ENCODE measurements at regions of chr6 and their contacts with region 1.

Region 1: GRCh38 chr6:169789982-169790927 is 38.8 kb downstream of the ERMARD start:
- DNase-seq: peak; percentile 68
- H3K4me3 Mint-ChIP-seq: peak overlapping the region; percentile 70
- H3K27ac Mint-ChIP-seq: no peak overlapping the region
- H3K4me1 Mint-ChIP-seq: peaks cover 5% of the 10 kb centered on the region
- H3K27me3 Mint-ChIP-seq: peaks cover 14% of the 10 kb centered on the region
- CTCF ChIP-seq: peak; percentile 90

Region 2: DNA sequence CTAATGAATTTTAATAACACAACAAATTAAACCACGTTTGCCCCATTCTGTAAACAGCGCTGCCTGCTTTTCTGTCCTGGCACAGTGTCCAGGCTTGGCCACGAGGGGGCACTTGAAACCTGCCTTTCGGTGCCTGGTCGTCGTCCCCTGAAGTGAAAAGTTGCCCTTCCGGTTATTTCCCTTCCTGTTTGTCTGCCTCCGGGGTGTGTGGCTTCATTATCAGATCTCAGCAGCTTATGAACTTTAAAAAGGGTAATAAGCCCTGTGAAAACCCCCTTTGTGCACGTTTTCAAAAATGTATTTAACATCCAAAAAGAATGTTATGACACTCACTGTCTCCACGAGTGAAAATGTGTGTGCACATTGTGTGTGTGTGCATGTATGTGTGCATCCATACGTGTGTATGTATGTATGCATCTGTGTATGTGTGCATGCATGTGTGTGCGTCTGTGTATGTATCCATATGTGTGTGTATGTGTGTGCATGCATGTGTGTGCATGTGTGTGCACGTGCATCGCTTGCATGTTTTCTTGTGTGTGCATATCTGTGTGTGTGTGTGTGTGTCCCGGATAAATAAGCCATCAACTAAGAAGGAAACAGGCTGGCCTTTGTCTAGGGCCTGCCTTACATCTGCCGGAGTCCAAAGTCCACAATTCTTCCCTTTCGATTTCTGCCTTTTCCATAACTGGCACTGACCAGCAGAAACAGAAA is 895.0 kb before region 1 on chr6:
- CTCF ChIA-PET with region 1: interaction called, 4 read pairs
- POLR2A ChIA-PET with region 1: no interaction called
- intact Hi-C with region 1: loop called (anchors 10 kb)
- DNase-seq: peak; percentile 75
- H3K4me3 Mint-ChIP-seq: peak overlapping the region; percentile 35
- H3K27ac Mint-ChIP-seq: no peak overlapping the region
- H3K4me1 Mint-ChIP-seq: no peaks in the 10 kb centered on the region
- H3K27me3 Mint-ChIP-seq: peaks cover 35% of the 10 kb centered on the region
- CTCF ChIP-seq: peak; percentile 93

Region 3: GRCh38 chr6:169479783-169480495 is 310.3 kb before region 1 on chr6:
- CTCF ChIA-PET with region 1: no interaction called
- POLR2A ChIA-PET with region 1: no interaction called
- intact Hi-C with region 1: no loop called
- DNase-seq: no peak
- H3K4me3 Mint-ChIP-seq: no peak overlapping the region
- H3K27ac Mint-ChIP-seq: no peak overlapping the region
- H3K4me1 Mint-ChIP-seq: no peaks in the 10 kb centered on the region
- H3K27me3 Mint-ChIP-seq: no peaks in the 10 kb centered on the region
- CTCF ChIP-seq: no peak

Region 4: DNA sequence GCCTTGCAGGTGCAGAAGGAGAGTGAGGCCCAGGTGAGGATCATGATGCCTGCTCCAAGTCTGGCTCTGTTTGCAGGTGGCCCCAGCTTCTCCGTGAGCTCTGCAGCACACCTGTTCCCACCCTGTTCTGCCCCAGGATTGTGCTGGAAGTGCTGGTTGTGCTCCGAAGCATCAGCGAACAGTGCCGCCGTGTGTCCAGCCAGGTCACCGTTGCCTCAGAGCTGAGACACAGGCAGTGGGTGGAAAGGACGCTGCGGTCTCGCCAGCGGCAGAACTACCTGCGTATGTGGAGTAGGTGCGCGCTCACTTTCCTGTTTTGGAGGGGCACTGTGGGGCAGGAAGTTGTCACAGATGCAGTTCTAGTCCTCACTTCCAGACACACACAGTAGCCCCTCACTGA is 13.9 kb before region 1 on chr6:
- CTCF ChIA-PET with region 1: interaction called, 12 read pairs
- POLR2A ChIA-PET with region 1: no interaction called
- intact Hi-C with region 1: no loop called
- DNase-seq: no peak
- H3K4me3 Mint-ChIP-seq: no peak overlapping the region
- H3K27ac Mint-ChIP-seq: no peak overlapping the region
- H3K4me1 Mint-ChIP-seq: peaks cover 6% of the 10 kb centered on the region
- H3K27me3 Mint-ChIP-seq: no peaks in the 10 kb centered on the region
- CTCF ChIP-seq: no peak

Region 5: GRCh38 chr6:169803271-169803811 is 13.1 kb after region 1 on chr6:
- CTCF ChIA-PET with region 1: interaction called, 33 read pairs
- POLR2A ChIA-PET with region 1: interaction called, 8 read pairs
- intact Hi-C with region 1: no loop called
- DNase-seq: no peak
- H3K4me3 Mint-ChIP-seq: no peak overlapping the region
- H3K27ac Mint-ChIP-seq: no peak overlapping the region
- H3K4me1 Mint-ChIP-seq: no peaks in the 10 kb centered on the region
- H3K27me3 Mint-ChIP-seq: peaks cover 47% of the 10 kb centered on the region
- CTCF ChIP-seq: no peak

Region 6: DNA sequence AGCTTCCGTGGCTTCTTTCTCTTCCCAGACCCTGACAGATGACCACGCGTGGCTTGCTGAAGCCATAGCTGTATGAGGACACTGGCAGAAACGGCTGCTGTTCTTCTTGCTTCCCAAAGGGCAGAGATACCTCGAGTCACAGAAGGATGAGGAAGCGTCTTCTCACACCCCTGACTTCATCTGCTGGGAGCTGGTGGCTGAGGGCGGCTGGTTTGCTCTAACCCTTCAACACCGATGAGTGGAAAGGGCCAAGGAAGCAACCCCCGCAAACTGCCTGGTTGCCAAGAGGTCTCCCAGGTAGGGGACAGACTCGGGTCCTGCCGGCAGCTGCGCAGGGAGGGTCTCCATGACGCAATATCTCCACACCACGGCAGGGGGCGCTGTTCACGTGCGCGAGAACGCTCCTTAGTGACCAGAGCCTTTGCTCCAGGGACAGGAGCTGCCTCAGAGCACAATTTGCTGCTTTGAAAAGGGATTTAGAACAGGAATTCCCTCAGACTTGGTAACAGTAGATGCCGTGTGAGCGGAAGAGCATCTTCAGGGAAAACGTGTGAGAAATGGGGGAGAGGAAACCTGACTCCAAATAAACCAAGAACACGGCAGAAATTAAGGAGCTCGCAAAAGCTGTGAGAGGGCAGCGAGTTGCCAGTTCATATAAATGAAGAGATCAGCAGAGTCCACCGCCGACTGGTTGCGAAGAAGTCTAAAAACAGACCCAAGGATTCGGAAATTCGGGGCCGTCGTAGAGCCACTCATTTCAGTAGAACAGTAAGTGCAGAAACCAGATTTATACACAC is 41.4 kb after region 1 on chr6:
- CTCF ChIA-PET with region 1: interaction called, 7 read pairs
- POLR2A ChIA-PET with region 1: interaction called, 4 read pairs
- intact Hi-C with region 1: loop called (anchors 2 kb)
- DNase-seq: peak; percentile 66
- H3K4me3 Mint-ChIP-seq: no peak overlapping the region
- H3K27ac Mint-ChIP-seq: no peak overlapping the region
- H3K4me1 Mint-ChIP-seq: peaks cover 6% of the 10 kb centered on the region
- H3K27me3 Mint-ChIP-seq: peaks cover 73% of the 10 kb centered on the region
- CTCF ChIP-seq: peak; percentile 90

Region 7: DNA sequence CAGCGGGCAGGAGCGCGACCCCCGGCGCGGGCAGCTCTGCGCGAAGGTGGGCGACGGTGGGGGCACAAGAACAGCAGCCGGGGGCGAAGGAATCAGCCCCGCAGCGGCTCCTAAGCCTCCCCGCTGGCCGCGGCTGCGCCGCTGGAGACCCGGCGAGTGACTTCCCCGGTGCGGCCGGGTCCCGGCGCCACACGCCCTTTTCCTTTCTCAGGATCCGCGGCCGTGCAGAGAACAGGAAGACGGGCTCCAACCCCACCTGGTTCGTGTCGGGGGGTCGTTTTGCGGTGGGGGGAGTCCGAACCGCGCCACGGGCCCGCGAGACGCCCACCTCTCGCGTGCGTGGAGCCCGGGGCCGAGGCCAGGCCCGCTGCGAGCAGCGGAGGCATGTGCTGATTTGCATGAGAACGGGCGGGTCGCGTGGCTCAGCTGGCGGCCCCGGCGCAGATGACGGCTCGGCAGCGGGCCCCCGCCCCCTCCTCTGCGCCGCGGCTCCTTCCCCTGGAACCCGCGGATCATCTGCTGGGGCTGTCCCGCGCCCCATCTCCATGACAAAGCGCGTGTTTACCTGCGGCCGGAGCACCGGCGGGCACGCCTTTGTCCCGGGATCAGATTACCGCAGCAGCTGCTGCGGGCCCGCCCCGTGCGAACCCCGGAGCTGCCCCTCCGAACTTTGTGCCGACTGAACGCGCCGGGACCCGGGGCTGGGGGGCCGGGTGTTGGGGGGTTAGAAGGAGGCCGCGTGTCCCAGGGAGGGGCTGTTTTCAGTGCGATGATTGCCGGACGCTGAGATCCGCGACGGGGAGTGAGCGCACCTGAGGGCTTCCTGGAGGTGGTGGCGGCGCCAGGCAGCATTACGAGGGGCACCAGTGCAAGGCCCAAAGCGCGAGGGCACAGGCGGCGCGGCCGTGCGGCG is 505.5 kb after region 1 on chr6:
- CTCF ChIA-PET with region 1: interaction called, 9 read pairs
- POLR2A ChIA-PET with region 1: interaction called, 7 read pairs
- intact Hi-C with region 1: loop called (anchors 1 kb)
- DNase-seq: peak; percentile 34
- H3K4me3 Mint-ChIP-seq: peak overlapping the region; percentile 71
- H3K27ac Mint-ChIP-seq: no peak overlapping the region
- H3K4me1 Mint-ChIP-seq: peaks cover 10% of the 10 kb centered on the region
- H3K27me3 Mint-ChIP-seq: peaks cover 47% of the 10 kb centered on the region
- CTCF ChIP-seq: no peak

Region 8: DNA sequence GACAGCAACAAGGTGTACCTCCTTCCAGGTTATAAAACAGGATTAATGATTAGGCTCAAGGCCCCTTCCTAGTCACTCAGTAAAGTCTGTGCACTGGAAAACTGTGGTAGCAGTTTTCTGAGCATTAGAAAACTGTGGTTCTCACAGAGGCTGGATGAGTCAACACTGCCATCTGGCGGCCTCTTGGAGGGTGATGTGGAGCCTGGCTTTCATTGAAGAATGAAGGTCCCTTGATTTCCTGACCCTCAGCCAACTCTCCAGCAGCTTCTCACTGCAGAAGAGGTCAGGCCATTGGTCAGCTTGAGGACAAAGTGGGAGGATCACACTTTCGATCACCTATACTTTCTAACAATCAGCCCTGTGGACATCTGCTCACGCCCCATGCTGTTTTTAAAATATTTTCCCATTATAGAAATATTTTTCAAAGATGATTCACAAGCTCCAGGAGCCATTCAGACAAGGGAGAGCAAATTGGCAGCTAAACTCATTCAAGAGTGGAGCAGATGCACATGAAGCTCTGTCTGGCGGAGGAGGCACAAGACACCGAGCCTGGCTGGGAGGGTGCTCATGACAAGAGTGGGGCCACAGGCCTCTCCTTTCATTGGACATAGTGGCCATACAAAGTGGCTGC is 739.7 kb after region 1 on chr6:
- CTCF ChIA-PET with region 1: interaction called, 61 read pairs
- POLR2A ChIA-PET with region 1: interaction called, 3 read pairs
- intact Hi-C with region 1: loop called (anchors 1 kb)
- DNase-seq: peak; percentile 84
- H3K4me3 Mint-ChIP-seq: no peak overlapping the region
- H3K27ac Mint-ChIP-seq: no peak overlapping the region
- H3K4me1 Mint-ChIP-seq: no peaks in the 10 kb centered on the region
- H3K27me3 Mint-ChIP-seq: no peaks in the 10 kb centered on the region
- CTCF ChIP-seq: peak; percentile 77

Measured in MCF 10A (cell line).